Uterus (tissue), 4 donors: ENCODE measurements at regions of chr7 and their contacts with region 1.

Region 1: GRCh38 chr7:50653126-50653864 is 88.1 kb upstream of the DDC start:
- DNase-seq: peak; percentile 69 to 80
- H3K4me3 ChIP-seq: no peak overlapping the region
- H3K27ac ChIP-seq: peak overlapping the region; percentile 87 to 95
- H3K4me1 ChIP-seq: peaks cover 20 to 26% of the 10 kb centered on the region in 2 donors
- H3K27me3 ChIP-seq: no peaks in the 10 kb centered on the region
- CTCF ChIP-seq: no peak
- POLR2A ChIP-seq: no peak

Region 2: DNA sequence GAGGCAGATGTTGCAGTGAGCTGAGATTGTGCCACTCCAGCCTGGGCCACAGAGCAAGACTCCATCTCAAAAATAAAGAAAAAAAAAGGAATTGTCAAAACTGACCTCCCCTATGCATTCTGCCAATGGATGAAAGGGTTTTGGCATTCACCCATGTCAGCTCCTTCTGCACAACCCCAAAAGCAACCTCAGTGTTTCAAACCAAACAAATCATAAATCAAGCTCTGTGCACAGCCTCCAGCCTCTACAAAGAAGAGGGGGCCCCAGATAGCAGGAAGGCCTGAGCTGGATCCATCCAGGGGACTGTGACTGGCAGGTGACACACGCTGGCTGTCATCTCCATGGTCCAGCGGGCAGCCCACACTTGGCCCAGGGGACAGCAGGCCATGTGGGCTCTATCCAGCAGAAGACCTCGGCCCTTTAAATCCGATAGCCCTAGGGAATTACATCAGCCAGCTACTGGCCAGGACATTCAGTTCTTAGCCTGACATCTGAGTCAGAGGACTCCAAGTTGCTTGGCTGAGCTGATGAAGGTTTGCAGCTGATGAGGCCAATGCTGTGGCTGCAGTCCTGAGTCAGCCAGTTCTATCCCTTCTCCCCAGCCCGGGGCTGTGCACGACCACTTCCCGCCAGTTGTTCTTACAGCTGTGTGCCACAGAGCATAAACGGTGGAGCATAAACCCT is 151.2 kb before region 1 on chr7:
- intact Hi-C with region 1: loop called (anchors 10 kb)
- DNase-seq: peak; percentile 85 to 92
- H3K4me3 ChIP-seq: no peak overlapping the region
- H3K27ac ChIP-seq: peak overlapping the region; percentile 80 to 93
- H3K4me1 ChIP-seq: peaks cover 14 to 15% of the 10 kb centered on the region in 2 donors
- H3K27me3 ChIP-seq: no peaks in the 10 kb centered on the region
- CTCF ChIP-seq: no peak
- POLR2A ChIP-seq: no peak

Region 3: GRCh38 chr7:50610521-50611277 is 42.6 kb before region 1 on chr7:
- intact Hi-C with region 1: no loop called
- DNase-seq: no peak
- H3K4me3 ChIP-seq: no peak overlapping the region
- H3K27ac ChIP-seq: no peak overlapping the region
- H3K4me1 ChIP-seq: no peaks in the 10 kb centered on the region
- H3K27me3 ChIP-seq: no peaks in the 10 kb centered on the region
- CTCF ChIP-seq: no peak
- POLR2A ChIP-seq: no peak